Activated CD4-positive, alpha-beta memory T cell treated with anti-CD3 and anti-CD28 coated beads for 36 hours (primary cell): ENCODE measurements at regions of chr14 and their contacts with region 1.

Region 1: DNA sequence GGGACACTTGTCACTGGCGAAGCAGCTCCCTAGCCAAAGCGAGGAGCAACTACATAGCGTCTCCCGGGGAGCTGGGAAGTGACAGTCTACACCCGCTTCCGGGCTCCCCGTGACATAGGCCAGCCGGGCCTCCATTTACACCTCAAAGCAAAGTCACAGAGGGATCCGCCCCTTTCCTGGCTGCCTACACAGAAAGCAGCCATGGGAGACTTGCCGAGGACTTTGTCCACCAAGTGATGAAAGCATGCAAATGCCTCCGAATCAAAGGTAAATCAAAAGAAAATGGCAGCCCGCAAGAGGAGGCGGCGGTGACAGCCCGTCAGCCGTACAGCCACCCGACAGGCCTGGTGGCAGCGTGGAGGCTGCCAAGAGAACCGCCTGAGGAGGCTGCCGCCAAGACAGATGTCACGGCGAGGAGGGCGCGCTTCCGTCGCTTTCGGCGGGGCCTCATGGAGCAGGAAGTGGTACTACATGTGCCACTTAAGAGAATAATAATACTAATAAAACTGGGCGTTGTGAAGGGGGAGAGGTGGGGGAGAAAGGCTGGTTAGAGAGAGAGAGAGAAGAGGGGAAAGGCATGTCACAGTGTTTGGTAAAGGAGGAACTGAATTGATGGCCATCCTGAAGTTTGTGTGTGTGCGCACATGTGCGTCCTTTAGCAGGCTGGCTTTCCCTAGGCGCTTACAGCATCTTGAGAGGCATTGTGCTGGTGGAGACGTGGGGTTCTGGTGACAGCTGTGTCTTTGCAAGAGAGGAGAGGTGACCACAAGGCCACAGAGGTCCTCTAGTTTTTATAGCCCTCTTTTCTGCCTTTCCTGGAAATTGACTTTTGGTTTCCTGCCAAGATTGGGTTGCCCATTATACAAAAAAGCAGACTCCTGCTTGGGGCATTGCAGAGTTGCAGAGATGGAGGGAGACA is 661.7 kb downstream of the VRK1 start:
- DNase-seq: peak; percentile 90
- H3K4me3 Mint-ChIP-seq: peak overlapping the region; percentile 96
- H3K27ac Mint-ChIP-seq: peak overlapping the region; percentile 100
- H3K4me1 Mint-ChIP-seq: peaks cover 50% of the 10 kb centered on the region
- H3K27me3 Mint-ChIP-seq: no peaks in the 10 kb centered on the region

Region 2: GRCh38 chr14:97306760-97307246 is 152.1 kb before region 1 on chr14:
- CTCF ChIA-PET with region 1: interaction called, 3 read pairs
- POLR2A ChIA-PET with region 1: interaction called, 8 read pairs
- intact Hi-C with region 1: loop called (anchors 1 kb)
- DNase-seq: peak; percentile 39
- H3K4me3 Mint-ChIP-seq: no peak overlapping the region
- H3K27ac Mint-ChIP-seq: peak overlapping the region; percentile 92
- H3K4me1 Mint-ChIP-seq: peaks cover 29% of the 10 kb centered on the region
- H3K27me3 Mint-ChIP-seq: no peaks in the 10 kb centered on the region

Region 3: DNA sequence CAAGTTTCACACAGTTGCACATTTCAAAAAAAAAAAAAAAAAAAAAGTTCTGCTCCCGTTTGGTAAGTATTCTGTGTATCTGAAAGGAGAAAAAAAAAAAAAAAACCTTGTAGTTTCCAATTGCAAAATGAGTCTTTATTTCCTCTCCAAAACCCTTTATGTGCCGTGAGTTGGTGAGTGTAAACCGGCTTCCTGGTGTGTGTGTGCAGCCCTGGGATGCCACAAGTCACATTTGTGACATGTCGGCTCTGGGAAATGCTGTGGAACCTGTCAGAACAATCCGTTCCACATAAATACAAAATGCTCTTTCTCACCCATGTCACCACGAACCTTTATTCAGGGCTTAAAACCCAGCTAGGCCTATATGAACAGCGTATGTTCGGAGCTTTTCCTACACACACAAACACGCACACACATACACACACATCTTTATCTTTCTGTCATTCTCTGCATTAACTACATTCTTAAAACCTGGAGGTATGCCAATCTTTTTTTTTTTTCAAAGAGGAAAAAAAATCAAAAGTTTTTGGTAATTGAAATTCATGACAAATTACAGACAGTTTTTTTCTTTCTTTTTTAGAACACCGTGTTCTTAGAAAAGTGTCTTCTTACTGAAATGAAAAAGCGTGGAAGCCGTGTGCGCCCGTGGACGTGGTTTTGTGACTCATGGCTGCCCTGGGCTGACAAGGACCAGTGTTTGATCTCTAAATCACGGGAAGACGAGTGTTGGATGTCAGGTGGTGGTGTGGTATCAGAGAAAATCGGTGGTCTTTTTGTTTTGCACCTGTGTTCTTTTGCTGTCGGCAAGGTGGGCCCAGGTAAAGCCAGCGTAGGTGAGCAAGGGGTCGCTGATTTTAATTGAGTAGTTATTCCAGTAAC is 49.7 kb before region 1 on chr14:
- CTCF ChIA-PET with region 1: interaction called, 3 read pairs
- POLR2A ChIA-PET with region 1: no interaction called
- intact Hi-C with region 1: loop called (anchors 1 kb)
- DNase-seq: peak; percentile 75
- H3K4me3 Mint-ChIP-seq: peak overlapping the region; percentile 49
- H3K27ac Mint-ChIP-seq: peak overlapping the region; percentile 92
- H3K4me1 Mint-ChIP-seq: peaks cover 38% of the 10 kb centered on the region
- H3K27me3 Mint-ChIP-seq: peaks cover 5% of the 10 kb centered on the region

Region 4: DNA sequence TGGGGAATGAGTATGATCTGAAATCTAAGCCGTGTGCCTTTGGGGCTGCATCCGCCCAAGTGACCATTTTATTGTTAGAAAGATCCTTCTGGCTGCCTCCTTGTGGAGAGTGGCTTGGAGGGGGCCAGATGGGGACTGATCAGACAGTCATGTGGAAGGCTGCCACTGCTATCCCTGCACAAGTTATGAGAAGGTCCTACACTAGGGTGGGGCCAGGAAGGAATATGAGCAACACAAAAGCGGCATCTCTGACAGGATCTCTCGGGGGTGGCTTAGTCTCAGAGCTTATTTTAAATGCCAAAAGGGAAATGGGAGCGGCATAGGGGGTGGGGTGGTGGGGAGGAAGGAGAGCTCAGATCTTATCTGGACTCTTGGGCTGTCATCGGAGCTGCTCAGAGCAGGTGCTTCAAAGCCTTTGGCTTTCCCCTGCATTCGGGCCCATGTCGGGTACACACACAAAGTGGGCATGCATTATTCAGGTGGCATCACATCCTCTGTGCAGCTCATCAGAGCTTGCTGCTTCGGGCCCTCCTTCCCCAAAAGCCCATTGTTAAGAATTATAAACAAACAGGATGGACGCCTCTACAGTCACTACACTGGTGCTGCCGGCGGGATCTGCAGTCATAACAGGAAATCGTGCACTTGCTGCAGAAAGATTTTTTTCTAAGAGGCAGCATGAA is 143.7 kb after region 1 on chr14:
- CTCF ChIA-PET with region 1: no interaction called
- POLR2A ChIA-PET with region 1: no interaction called
- intact Hi-C with region 1: loop called (anchors 5 kb)
- DNase-seq: peak; percentile 80
- H3K4me3 Mint-ChIP-seq: no peak overlapping the region
- H3K27ac Mint-ChIP-seq: no peak overlapping the region
- H3K4me1 Mint-ChIP-seq: peaks cover 29% of the 10 kb centered on the region
- H3K27me3 Mint-ChIP-seq: no peaks in the 10 kb centered on the region

Region 5: GRCh38 chr14:97724265-97724731 is 265.4 kb after region 1 on chr14:
- CTCF ChIA-PET with region 1: no interaction called
- POLR2A ChIA-PET with region 1: no interaction called
- intact Hi-C with region 1: loop called (anchors 5 kb)
- DNase-seq: peak; percentile 58
- H3K4me3 Mint-ChIP-seq: peak overlapping the region; percentile 71
- H3K27ac Mint-ChIP-seq: peak overlapping the region; percentile 92
- H3K4me1 Mint-ChIP-seq: peaks cover 49% of the 10 kb centered on the region
- H3K27me3 Mint-ChIP-seq: no peaks in the 10 kb centered on the region